Activated CD4-positive, alpha-beta T cell treated with anti-CD3 and anti-CD28 coated beads, Interleukin-2, amount 10 ng/mL, durations not matched to agents 24 days and 14 days (primary cell): ENCODE measurements at regions of chr3 and their contacts with region 1.

Region 1: DNA sequence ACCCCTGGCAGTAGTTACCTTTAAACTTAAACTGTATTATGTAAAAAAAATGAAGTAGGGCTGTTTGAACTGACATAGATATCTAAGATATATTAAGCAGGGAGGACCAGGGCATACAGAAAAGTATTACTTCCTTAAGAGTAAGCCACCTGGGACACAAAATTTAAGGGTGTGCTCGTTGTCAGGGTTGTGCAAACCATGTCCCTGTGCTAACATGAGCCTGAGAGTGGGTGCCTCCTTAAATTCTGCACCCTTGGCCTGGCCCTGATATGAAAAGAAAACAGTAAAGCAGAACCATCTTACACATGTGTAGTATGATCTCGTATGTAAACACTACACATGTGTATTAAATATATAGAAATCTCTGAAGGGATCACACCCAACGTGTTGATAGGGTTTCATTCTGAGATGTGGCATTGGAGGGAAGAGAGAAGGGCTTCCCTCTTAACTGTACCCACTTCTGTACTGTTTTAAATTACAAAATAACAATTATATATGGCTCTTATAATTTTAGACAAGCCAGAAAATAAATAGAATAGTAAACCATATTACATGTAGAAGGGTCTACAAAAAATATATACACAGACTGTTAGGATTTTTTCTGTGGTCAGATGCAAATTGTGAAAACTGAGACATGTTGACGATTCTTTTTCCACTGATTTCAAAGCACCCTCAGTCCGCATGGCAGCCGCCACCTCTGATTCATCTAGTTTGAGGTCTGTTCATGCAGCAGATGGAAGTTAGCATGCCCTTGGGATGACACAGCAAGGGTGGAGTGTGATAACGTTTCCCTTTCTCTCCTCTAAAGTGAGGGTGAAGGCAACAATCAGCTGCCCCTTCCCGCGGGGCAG is 400.8 kb upstream of the PROK2 start:
- DNase-seq: no peak
- H3K4me3 Mint-ChIP-seq: peak overlapping the region; percentile 18
- H3K27ac Mint-ChIP-seq: peak overlapping the region; percentile 21
- H3K4me1 Mint-ChIP-seq: peaks cover 19% of the 10 kb centered on the region
- H3K27me3 Mint-ChIP-seq: peaks cover 5% of the 10 kb centered on the region

Region 2: GRCh38 chr3:71583566-71584449 is 602.0 kb before region 1 on chr3 and contains the start of gene FOXP1:
- intact Hi-C with region 1: no loop called
- DNase-seq: peak; percentile 87
- H3K4me3 Mint-ChIP-seq: peak within 1 kb of the TSS; percentile 89
- H3K27ac Mint-ChIP-seq: peak within 1 kb of the TSS; percentile 95
- H3K4me1 Mint-ChIP-seq: peaks cover 38% of the 10 kb centered on the region
- H3K27me3 Mint-ChIP-seq: peaks cover 17% of the 10 kb centered on the region
- total RNA-seq, gene FOXP1: 102 and 110 TPM in 2 replicates

Region 3: DNA sequence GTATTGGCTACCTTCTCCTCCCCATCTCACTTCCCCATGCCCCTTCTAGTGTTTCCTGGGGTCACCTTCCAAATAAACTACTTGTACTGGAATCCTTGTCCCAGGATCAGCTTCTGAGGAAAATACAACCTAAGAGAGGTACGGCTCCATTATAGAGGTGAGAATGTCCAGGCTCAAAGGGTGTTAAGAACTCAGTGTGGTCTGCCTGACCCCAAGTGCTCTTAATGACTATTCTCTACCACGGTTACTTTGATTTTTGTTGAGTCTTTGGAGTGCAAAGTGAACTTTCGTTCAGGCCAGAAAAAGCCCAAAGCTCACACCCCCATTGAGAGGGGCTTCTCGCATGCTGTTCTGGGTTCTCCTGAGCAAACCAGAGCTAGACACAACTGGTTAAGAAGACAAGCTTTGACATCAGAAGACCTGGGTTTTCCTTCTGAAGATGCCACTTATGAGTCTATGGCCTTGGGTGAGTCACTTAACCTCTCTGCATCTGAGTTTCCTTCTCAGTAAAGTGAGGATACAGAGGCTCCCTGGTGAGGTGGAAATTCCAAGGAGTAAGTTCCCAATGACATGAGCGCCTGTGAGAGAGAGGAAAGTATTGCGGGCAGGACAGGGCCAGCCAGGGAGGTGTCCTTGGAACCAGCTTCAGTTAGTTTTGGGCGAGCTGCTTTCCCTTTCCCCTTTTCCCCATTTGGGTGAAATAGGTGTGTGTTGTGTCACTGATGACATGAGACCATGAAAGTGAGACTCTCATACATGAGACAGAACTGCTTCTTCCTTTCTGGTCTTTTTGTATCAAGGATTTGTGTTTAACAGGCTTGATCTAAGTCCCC is 74.2 kb after region 1 on chr3:
- intact Hi-C with region 1: loop called (anchors 5 kb)
- DNase-seq: no peak
- H3K4me3 Mint-ChIP-seq: no peak overlapping the region
- H3K27ac Mint-ChIP-seq: peak overlapping the region; percentile 56
- H3K4me1 Mint-ChIP-seq: peaks cover 25% of the 10 kb centered on the region
- H3K27me3 Mint-ChIP-seq: no peaks in the 10 kb centered on the region

Region 4: GRCh38 chr3:72274493-72275330 is 88.9 kb after region 1 on chr3:
- intact Hi-C with region 1: no loop called
- DNase-seq: peak; percentile 71
- H3K4me3 Mint-ChIP-seq: peak overlapping the region; percentile 6
- H3K27ac Mint-ChIP-seq: no peak overlapping the region
- H3K4me1 Mint-ChIP-seq: peaks cover 27% of the 10 kb centered on the region
- H3K27me3 Mint-ChIP-seq: peaks cover 6% of the 10 kb centered on the region